GM23248 (cell line): ENCODE measurements at regions of chr2 and their contacts with region 1.

Region 1: GRCh38 chr2:200703127-200703925 is 108.4 kb upstream of the BZW1 start:
- DNase-seq: peak; percentile 83
- H3K4me3 ChIP-seq: no peak overlapping the region
- H3K27ac ChIP-seq: no peak overlapping the region
- H3K4me1 ChIP-seq: no peaks in the 10 kb centered on the region
- H3K27me3 ChIP-seq: no peaks in the 10 kb centered on the region

Region 2: GRCh38 chr2:200172944-200173581 is 530.3 kb before region 1 on chr2:
- in situ Hi-C with region 1: no loop called
- DNase-seq: peak; percentile 10
- H3K4me3 ChIP-seq: no peak overlapping the region
- H3K27ac ChIP-seq: no peak overlapping the region
- H3K4me1 ChIP-seq: peaks cover 4% of the 10 kb centered on the region; the same call in 1 of the 2 replicates
- H3K27me3 ChIP-seq: 0 out of 2 replicates have a peak, but pooled peaks cover under 1% of the 10 kb centered on the region

Region 3: DNA sequence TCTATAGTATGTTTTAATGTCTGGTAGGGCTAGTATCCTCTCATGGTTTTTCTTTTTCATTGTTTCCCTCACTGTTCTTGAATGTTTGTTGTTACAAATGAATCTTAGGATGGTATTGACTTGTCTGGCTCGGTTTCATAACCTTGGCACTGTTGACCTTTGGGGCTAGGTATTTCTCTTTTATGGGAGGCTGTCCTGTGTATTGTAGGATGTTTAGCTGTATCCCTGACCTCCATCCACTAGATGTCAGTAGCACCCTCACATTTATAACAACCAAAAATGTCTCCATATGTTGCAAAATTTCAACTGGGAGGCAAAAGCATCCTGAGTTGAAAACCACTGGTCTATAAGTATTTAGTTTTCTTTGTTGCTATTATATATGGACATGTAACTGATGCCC is 124.5 kb before region 1 on chr2:
- in situ Hi-C with region 1: loop called (anchors 10 kb)
- DNase-seq: peak; percentile 64
- H3K4me3 ChIP-seq: no peak overlapping the region
- H3K27ac ChIP-seq: no peak overlapping the region
- H3K4me1 ChIP-seq: no peaks in the 10 kb centered on the region
- H3K27me3 ChIP-seq: no peaks in the 10 kb centered on the region